GM10248 (cell line): ENCODE measurements at regions of chr4 and their contacts with region 1.

Region 1: GRCh38 chr4:147866532-147867271 is 134.8 kb downstream of the ARHGAP10 start:
- DNase-seq: peak; percentile 80
- CTCF ChIP-seq: peak; percentile 97

Region 2: DNA sequence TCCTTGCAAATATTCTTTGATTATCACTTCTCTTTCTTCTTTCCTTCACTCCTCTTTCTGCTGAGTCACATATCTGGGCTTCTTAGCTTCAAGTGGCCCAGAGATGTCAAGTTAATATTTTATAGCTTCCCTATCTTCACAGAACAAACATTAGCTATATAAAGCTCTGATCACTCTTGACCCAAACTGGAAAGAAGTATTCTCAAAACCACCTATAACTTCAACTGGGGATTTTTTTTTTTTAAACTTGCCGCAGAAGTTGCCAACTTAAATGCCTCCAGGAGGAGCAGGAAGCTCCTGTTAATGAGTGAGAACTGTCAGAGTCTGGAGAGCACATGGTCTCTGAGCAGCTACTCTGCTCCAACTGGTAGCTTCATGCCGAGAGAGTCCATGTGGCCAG is 619.1 kb before region 1 on chr4:
- CTCF ChIA-PET with region 1: no interaction called
- POLR2A ChIA-PET with region 1: no interaction called
- DNase-seq: no peak
- CTCF ChIP-seq: no peak

Region 3: DNA sequence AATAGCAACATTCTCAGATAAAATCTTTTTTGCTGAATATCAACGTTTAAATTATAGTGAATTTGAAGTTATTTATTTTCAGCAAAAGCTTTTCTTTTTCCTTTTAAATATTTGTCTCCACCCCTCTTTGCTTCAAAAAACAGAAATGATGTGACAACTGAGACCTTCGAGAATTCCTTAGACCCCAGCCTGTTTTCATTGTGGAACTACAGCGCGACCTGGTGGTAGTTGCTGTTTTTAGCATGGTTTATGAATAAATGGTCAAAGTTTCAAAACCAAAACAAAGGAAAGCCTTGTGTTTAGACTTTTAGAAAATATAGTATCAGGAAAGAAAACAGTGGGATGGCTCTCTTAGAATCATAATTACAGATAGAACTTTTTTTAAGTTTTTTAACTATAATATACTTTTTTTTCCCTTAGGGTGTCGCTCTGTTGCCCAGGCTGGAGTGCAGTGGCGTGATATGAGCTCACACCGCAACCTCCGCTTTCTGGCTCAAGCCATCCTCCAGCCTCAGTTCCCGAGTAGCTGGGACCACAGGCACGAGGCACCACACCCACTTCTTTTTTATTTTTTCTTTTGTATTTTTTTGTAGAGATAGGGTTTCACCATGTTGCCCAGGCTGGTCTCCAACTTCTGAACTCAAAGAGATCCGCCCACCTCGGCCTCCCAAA is 276.3 kb before region 1 on chr4:
- CTCF ChIA-PET with region 1: interaction called, 124 read pairs
- POLR2A ChIA-PET with region 1: no interaction called
- DNase-seq: peak; percentile 54
- CTCF ChIP-seq: peak; percentile 82

Region 4: DNA sequence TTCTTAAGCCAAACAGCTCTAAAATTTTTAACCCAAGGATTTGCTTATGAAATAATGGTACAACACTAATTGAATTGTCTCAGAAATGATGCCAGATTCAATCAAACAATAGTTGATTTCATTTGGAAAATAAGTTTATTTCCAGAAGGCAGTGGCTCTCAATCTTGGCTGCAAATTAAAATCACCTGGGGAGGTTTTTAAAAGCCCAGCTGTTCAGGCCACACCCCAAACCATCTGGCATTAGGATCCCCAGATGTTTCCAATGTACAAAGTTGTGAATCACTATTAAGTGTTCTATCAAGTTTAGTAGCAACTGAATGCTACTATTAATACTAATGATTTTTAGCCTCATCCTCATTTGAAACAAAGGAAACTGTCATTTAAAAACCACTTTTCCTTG is 227.3 kb before region 1 on chr4:
- CTCF ChIA-PET with region 1: interaction called, 23 read pairs
- POLR2A ChIA-PET with region 1: no interaction called
- DNase-seq: no peak
- CTCF ChIP-seq: no peak

Region 5: GRCh38 chr4:147723326-147723725 is 143.4 kb before region 1 on chr4:
- CTCF ChIA-PET with region 1: interaction called, 59 read pairs
- POLR2A ChIA-PET with region 1: no interaction called
- DNase-seq: no peak
- CTCF ChIP-seq: no peak

Region 6: DNA sequence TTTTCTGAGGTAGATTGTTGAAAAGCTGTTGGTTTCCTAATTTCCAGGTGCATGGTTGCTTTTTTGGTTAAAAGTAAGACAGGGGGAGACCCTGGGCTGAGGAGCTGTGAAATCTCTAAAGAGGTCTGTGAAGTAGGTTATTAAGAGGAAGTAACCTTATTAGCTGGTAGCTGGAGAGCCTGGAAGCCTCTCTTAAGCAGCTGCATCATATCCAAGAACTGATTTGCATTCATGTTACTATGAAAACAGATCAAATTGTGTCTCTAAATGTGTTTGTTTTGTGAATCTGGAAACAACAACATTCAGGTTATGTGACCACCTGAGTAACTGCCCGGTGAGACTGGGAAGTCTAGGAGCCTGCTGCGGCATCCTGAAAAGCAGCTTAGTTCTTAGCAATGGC is 80.7 kb before region 1 on chr4:
- CTCF ChIA-PET with region 1: interaction called, 43 read pairs
- POLR2A ChIA-PET with region 1: no interaction called
- DNase-seq: no peak
- CTCF ChIP-seq: no peak

Region 7: DNA sequence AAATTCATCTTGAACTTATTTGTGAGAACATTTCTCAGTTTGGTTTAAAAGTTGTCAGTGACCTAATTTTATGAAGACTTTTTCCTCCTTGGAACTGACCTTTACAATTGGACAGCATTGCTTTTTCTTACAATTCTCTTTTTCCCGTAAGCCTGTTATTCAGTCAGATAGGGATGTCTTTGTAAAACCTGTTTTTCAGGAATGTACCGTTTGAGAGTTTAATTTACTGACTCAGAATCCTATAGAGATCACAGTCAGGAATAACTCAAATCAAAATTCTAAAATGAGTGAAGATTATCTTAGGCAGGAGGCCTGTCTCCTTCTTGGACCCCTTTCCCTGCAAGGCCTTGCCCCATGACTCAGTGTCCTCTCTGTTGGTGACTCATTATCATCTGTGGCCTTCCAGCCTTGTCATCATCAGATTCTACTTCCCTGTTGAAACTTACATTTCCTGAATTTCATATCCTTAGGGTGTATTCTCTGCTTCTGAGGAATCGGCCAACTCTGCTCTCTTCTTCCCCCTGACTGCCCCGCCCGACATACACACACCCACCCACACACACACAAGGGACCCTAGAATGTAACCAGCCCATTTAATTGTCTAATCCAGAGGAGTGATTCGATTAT is 35.0 kb before region 1 on chr4:
- CTCF ChIA-PET with region 1: interaction called, 210 read pairs
- POLR2A ChIA-PET with region 1: no interaction called
- DNase-seq: no peak
- CTCF ChIP-seq: no peak

Region 8: DNA sequence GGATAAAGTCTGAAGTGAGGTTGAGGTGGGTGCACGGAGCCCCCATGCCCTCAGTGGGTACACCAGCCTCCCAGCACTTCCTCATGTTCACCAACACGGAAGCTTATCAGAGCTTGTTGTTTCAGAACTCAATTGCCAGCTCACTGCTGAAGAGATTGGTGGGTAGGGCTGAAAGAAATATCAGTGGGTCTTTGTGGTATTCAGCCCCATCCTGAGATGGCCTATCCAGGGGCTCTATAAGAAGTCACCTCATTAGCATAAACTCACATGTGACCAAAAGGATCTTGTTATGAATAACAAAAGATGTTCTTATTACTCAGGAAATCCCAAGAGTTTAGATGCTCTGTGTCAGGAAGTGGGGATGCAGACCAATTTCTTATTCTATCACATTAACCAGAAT is 42.5 kb after region 1 on chr4:
- CTCF ChIA-PET with region 1: interaction called, 20 read pairs
- POLR2A ChIA-PET with region 1: no interaction called
- DNase-seq: no peak
- CTCF ChIP-seq: no peak